HEK293 (cell line): ENCODE measurements at regions of chr22 and their contacts with region 1.

Region 1: DNA sequence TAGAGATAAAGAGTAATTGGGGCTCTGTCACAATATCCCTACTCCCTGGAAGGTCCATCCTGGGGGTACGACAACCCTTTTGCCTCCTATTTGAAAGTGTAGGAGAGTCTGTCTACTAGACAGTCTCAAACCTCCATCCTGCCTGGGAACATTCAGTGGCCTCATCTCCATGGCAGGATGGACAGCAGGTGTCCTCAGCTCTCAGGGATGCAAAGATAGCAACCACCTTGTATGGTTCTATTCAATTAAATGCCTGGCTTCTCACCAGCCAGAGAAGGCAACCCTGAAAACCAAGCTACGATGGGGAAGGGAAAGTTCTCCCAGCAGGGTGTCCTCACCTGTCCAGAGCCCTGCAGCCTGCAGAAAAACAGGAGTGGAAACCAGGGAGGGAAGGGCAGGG is 164.9 kb downstream of the MIAT start:
- H3K4me3 ChIP-seq: no peak overlapping the region
- H3K27ac ChIP-seq: no peak overlapping the region
- H3K4me1 ChIP-seq: no peaks in the 10 kb centered on the region
- CTCF ChIP-seq: no peak

Region 2: DNA sequence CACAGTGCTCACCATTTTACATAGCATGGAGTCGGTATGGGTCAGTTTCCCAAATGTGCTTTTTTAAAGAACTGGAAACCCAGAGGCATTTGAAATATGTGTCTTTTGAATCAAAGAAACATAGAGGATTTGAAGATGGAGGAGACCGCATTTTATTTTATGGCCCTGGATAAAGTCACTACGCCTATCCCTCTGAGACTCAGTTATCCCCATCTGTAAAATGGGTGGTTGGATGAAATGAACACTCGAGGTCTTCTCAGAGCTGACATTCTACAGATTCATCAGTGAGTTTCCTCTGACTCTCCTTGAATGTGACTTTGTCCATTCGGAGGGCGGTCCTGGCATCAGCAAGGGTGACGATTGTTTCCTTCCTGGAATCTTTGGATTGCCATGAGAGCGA is 29.8 kb before region 1 on chr22:
- CTCF ChIA-PET with region 1: no interaction called
- POLR2A ChIA-PET with region 1: interaction called, 11 read pairs
- H3K4me3 ChIP-seq: no peak overlapping the region
- H3K27ac ChIP-seq: no peak overlapping the region
- H3K4me1 ChIP-seq: no peaks in the 10 kb centered on the region
- CTCF ChIP-seq: no peak